Heart right ventricle (tissue), 16 donors: ENCODE measurements at regions of chr13 and their contacts with region 1.

Region 1: DNA sequence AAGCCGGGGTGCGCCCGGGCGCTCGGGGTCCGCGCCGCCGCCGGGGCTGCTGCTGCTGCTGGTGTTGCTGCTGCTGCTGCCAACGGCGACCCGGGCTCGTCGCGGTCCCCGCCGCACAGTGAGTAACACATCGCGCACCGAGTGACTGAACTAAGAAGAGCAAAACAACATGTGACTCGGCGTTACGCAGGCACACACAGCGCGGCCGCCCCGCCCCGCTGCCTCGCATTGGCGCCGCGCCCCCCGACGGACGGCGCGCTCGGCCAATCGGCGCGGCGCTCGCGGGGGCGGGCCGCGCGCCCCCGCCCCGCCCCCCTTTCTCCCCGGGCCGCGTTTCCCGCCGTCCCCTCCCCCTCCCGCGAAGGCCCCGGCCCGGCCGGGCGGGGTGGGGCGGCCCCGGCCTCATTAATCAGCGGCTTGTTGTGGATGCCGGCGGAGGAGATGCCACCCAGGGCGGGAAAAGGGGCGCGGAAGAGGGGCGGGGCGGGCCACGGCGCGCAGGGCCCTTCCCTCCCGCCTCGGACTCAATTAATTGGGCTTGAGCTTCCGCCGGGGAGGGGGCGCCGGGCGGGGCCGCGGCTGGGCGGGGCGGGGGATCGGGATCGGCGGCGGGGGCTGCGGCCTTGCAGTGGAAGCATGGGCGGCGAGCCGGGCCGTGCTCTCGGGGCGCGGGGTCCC is at the start of gene IRS2:
- DNase-seq: peak; percentile 91
- ATAC-seq: peak; percentile 79 to 88 (median 85)
- H3K4me3 ChIP-seq: peak within 1 kb of the TSS; percentile 70 to 91 (median 84)
- H3K27ac ChIP-seq: peak within 1 kb of the TSS; percentile 83 to 98 (median 91)
- H3K4me1 ChIP-seq: peaks cover 0 to 52% (median 31%) of the 10 kb centered on the region in 9 donors
- H3K27me3 ChIP-seq: peaks cover 0 to 28% (median 11%) of the 10 kb centered on the region in 7 donors
- CTCF ChIP-seq: no peak
- total RNA-seq, gene IRS2: 10.2 to 49.3 (median 13.7) TPM

Region 2: DNA sequence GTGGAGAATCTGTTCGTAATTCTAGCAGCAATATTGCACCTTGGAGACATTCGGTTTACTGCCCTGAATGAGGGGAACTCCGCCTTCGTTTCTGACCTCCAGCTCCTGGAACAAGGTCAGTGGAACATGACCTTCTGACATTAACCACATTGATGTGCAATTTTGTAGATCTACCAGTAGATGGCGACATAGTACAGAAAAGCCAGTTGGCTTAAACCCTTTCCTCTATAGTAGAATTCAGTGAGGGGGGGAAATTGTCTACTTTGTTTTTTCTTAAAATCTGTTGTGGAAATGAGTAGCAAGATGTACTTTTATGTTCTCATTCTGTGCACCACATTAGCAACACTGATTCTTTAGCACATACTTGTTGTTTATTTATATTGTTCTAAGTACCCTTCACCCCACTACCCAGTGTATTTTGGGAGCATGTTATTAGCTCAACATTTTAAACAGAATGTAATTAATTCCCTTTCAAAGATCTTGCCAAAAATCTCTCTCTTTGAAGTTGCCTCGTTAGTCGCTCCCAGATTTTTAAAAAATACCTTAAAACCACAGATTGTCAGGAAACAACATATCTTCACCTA is 825.0 kb before region 1 on chr13:
- intact Hi-C with region 1: loop called in 8 of 10 experiments (anchors 2 to 10 kb)
- DNase-seq: no peak
- ATAC-seq: peak; percentile 77 to 88 (median 82)
- H3K4me3 ChIP-seq: no peak overlapping the region
- H3K27ac ChIP-seq: no peak overlapping the region
- H3K4me1 ChIP-seq: no peaks in the 10 kb centered on the region
- H3K27me3 ChIP-seq: no peaks in the 10 kb centered on the region
- CTCF ChIP-seq: peak; percentile 72 to 92 (median 88)

Region 3: DNA sequence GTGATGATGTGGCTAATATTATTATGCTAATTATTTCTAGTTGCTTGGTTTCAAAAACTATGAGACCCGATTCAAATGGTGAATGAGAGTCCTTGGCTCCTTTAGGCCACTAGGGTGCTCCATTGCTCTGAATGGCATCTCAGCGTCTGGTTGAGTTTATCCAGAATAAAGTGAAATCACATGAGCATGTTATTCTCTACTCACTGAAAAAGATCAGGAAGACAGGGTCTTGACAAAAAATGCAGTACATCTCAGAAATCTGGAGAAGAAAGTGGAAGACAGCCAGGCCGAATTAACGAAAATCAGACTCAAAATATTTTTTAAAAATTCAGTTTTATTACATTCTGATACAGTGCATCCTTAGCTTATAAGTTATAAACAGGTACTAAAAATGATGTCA is 641.0 kb before region 1 on chr13:
- intact Hi-C with region 1: loop called in 7 of 10 experiments (anchors 5 to 10 kb)
- DNase-seq: peak in 1 of 2 donors; percentile 42
- ATAC-seq: peak in 7 of 8 donors; percentile 58 to 90 (median 84)
- H3K4me3 ChIP-seq: no peak overlapping the region
- H3K27ac ChIP-seq: no peak overlapping the region
- H3K4me1 ChIP-seq: peaks cover 0 to 4% (median 0%) of the 10 kb centered on the region in 9 donors
- H3K27me3 ChIP-seq: peaks cover 4 to 24% (median 18%) of the 10 kb centered on the region in 7 donors
- CTCF ChIP-seq: peak; percentile 54 to 80 (median 69)

Region 4: GRCh38 chr13:109610517-109610916 is 176.1 kb before region 1 on chr13:
- intact Hi-C with region 1: loop called in 4 of 10 experiments (anchors 5 to 10 kb)
- DNase-seq: peak; percentile 23 to 37
- ATAC-seq: peak in 6 of 8 donors; percentile 56 to 78 (median 72)
- H3K4me3 ChIP-seq: no peak overlapping the region
- H3K27ac ChIP-seq: no peak overlapping the region
- H3K4me1 ChIP-seq: no peaks in the 10 kb centered on the region
- H3K27me3 ChIP-seq: peaks cover 0 to 12% (median 0%) of the 10 kb centered on the region in 7 donors
- CTCF ChIP-seq: peak in 8 of 9 donors; percentile 20 to 60 (median 44)

Region 5: DNA sequence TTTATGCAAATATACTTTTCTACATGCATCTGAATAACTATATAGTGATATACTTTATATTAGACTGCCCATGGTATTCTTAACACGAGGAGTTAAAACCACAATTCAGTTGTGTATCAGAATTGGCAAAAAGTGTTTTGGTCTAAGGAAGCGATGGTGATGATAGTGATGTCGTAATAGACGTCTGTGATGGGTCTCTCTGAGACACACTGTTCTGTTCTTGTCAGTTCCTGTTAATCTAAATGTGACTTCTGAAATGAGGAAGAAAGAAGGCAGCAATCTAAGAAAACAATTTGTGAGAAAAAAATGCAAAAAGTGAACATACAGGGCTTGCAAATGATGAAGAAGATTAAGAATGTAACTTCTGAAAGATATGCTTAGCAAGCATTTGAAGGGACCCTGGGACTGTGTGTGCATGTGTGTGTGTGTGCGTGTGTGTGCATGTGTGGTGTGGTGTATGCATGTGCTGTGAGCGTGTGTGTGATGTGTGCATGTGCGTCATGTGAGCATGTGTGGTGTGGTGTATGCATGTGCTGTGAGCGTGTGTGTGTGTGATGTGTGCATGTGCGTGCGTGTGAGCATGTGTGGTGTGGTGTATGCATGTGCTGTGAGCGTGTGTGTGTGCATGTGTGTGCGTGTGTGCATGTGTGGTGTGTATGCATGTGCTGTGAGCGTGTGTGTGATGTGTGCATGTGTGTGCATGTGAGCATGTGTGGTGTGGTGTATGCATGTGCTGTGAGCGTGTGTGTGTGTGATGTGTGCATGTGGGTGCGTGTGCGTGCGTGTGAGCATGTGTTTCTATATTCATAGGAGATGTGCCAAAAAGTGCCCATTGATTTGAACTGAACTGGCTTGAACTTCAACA is 132.0 kb before region 1 on chr13:
- intact Hi-C with region 1: no loop called
- DNase-seq: no peak
- ATAC-seq: peak; percentile 44 to 85 (median 80)
- H3K4me3 ChIP-seq: no peak overlapping the region
- H3K27ac ChIP-seq: peak overlapping the region in 6 of 10 donors; percentile 4 to 80 (median 48)
- H3K4me1 ChIP-seq: peaks cover 0 to 55% (median 20%) of the 10 kb centered on the region in 9 donors
- H3K27me3 ChIP-seq: peaks cover 0 to 61% (median 33%) of the 10 kb centered on the region in 7 donors
- CTCF ChIP-seq: no peak

Region 6: DNA sequence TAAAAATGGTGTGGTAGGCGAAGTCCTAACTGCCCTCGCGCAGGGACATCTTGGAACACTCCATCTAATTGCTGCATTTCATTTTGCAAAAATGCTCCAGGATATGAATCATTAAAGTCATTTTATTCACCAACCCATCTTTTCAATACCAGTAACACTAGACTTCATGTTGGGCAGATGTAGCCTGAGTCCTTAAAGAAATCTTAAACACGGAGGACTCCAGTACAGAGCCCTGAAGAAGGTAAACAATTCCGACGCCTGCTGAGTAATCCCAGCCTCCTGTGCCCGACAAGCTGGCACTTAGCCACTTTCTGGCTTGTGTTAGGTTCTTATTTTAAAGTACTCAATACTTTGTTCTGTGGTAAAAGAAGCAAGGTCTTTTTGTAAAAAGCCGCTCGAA is 57.8 kb after region 1 on chr13:
- intact Hi-C with region 1: no loop called
- DNase-seq: no peak
- ATAC-seq: peak in 2 of 8 donors; percentile 43 to 48
- H3K4me3 ChIP-seq: no peak overlapping the region
- H3K27ac ChIP-seq: no peak overlapping the region
- H3K4me1 ChIP-seq: peaks cover 0 to 8% (median 0%) of the 10 kb centered on the region in 9 donors
- H3K27me3 ChIP-seq: peaks cover 0 to 9% (median 0%) of the 10 kb centered on the region in 7 donors
- CTCF ChIP-seq: no peak

Region 7: DNA sequence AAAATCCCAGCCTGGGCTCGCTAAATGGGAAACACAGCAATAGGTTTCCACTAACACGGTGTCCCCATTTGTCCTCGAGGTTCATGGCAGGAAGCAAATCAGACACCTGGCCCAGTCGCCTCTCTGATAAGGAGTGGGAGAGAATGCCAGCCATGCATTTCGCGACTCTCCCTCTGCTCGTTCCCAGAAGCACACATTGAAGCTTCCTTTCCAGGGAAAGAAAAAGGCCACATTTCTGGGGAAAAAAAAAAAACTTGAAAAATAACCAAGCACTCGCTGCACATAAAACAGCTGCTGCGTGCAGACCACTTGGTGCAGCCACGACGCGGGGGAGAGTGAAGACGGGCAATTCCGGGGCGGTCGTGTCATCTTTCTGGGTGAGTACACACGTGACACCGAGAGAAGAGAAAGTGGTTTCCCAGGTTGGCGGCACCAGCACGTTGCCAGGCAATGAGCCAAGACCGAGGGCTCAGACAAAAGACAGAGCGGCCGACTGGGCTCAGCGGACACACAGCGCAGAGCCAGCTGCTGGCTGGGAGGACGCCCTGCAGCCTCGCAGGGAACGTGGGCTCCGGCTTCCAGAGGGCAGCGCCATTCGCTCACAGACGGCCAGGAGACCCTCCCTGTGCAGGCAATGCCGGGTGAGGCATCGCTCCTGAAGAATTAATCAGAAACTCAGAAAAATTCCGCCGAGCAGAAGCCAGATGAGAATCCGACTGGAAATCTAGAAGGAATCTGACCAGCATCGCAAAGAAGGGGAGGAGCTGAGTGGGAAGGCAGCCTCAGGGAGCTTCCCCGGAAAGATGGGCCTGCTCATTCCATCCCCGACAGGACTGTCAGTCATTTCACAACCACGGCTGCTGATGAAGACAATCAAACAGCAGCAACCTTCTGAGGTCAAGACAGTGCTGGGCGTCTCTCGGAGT is 83.0 kb after region 1 on chr13:
- intact Hi-C with region 1: loop called in 1 of 10 experiments (anchors 10 kb)
- DNase-seq: peak; percentile 80 to 81
- ATAC-seq: peak; percentile 83 to 94 (median 88)
- H3K4me3 ChIP-seq: peak overlapping the region in 9 of 10 donors; percentile 15 to 52 (median 44)
- H3K27ac ChIP-seq: peak overlapping the region; percentile 42 to 87 (median 64)
- H3K4me1 ChIP-seq: peaks cover 0 to 38% (median 19%) of the 10 kb centered on the region in 9 donors
- H3K27me3 ChIP-seq: no peaks in the 10 kb centered on the region
- CTCF ChIP-seq: peak in 6 of 9 donors; percentile 16 to 50 (median 38)

Region 8: GRCh38 chr13:110138010-110138699 is 351.6 kb after region 1 on chr13:
- intact Hi-C with region 1: loop called in 3 of 10 experiments (anchors 10 kb)
- DNase-seq: peak; percentile 56 to 60
- ATAC-seq: peak; percentile 34 to 75 (median 62)
- H3K4me3 ChIP-seq: peak overlapping the region; percentile 51 to 69 (median 62)
- H3K27ac ChIP-seq: peak overlapping the region; percentile 74 to 93 (median 86)
- H3K4me1 ChIP-seq: peaks cover 2 to 44% (median 17%) of the 10 kb centered on the region in 9 donors
- H3K27me3 ChIP-seq: no peaks in the 10 kb centered on the region
- CTCF ChIP-seq: peak in 3 of 9 donors; percentile 5 to 34 (median 28)